ENCODE measurements at regions of chr17 and their contacts with region 1.

Region 1: GRCh38 chr17:57892146-57892828 is 42.4 kb upstream of the MRPS23 start:
- DNase-seq: peak; percentile 91 to 95
- H3K4me3 ChIP-seq: peak overlapping the region in 1 of 4 donors; percentile 24
- H3K27ac ChIP-seq: peak overlapping the region; percentile 81 to 95 (median 93)
- H3K4me1 ChIP-seq: peaks cover 59 to 87% (median 76%) of the 10 kb centered on the region in 4 donors
- H3K27me3 ChIP-seq: no peaks in the 10 kb centered on the region
- CTCF ChIP-seq: peak in 6 of 7 experiments; percentile 83 to 98 (median 97)
- EP300 ChIP-seq: no peak
- POLR2A ChIP-seq: no peak

Region 2: GRCh38 chr17:57955183-57955931 is 63.1 kb after region 1 on chr17 and contains the start of gene CUEDC1:
- intact Hi-C with region 1: loop called (anchors 10 kb)
- DNase-seq: peak; percentile 84 to 92
- H3K4me3 ChIP-seq: peak within 1 kb of the TSS; percentile 61 to 89 (median 76)
- H3K27ac ChIP-seq: peak within 1 kb of the TSS; percentile 88 to 99 (median 99)
- H3K4me1 ChIP-seq: peaks cover 31 to 59% (median 49%) of the 10 kb centered on the region in 4 donors
- H3K27me3 ChIP-seq: no peaks in the 10 kb centered on the region
- CTCF ChIP-seq: peak in 2 of 7 experiments; percentile 43 to 69
- EP300 ChIP-seq: no peak
- POLR2A ChIP-seq: no peak
- total RNA-seq, gene CUEDC1: 10.5 to 111 (median 23.6) TPM

Measured in stomach (tissue), 19 donors.